Activated CD4-positive, alpha-beta T cell treated with anti-CD3 and anti-CD28 coated beads, Interleukin-2, amount 10 ng/mL, durations not matched to agents 24 days and 14 days (primary cell): ENCODE measurements at regions of chr10 and their contacts with region 1.

Region 1: GRCh38 chr10:90969947-90970684 is 49.2 kb upstream of the ANKRD1 start:
- DNase-seq: no peak
- H3K4me3 Mint-ChIP-seq: no peak overlapping the region
- H3K27ac Mint-ChIP-seq: no peak overlapping the region
- H3K4me1 Mint-ChIP-seq: no peaks in the 10 kb centered on the region
- H3K27me3 Mint-ChIP-seq: peaks cover 26% of the 10 kb centered on the region

Region 2: GRCh38 chr10:90912174-90912573 is 57.9 kb before region 1 on chr10:
- intact Hi-C with region 1: loop called (anchors 10 kb)
- DNase-seq: no peak
- H3K4me3 Mint-ChIP-seq: no peak overlapping the region
- H3K27ac Mint-ChIP-seq: no peak overlapping the region
- H3K4me1 Mint-ChIP-seq: peaks cover 2% of the 10 kb centered on the region
- H3K27me3 Mint-ChIP-seq: peaks cover 7% of the 10 kb centered on the region